ENCODE measurements at regions of chr1 and their contacts with region 1.

Region 1: DNA sequence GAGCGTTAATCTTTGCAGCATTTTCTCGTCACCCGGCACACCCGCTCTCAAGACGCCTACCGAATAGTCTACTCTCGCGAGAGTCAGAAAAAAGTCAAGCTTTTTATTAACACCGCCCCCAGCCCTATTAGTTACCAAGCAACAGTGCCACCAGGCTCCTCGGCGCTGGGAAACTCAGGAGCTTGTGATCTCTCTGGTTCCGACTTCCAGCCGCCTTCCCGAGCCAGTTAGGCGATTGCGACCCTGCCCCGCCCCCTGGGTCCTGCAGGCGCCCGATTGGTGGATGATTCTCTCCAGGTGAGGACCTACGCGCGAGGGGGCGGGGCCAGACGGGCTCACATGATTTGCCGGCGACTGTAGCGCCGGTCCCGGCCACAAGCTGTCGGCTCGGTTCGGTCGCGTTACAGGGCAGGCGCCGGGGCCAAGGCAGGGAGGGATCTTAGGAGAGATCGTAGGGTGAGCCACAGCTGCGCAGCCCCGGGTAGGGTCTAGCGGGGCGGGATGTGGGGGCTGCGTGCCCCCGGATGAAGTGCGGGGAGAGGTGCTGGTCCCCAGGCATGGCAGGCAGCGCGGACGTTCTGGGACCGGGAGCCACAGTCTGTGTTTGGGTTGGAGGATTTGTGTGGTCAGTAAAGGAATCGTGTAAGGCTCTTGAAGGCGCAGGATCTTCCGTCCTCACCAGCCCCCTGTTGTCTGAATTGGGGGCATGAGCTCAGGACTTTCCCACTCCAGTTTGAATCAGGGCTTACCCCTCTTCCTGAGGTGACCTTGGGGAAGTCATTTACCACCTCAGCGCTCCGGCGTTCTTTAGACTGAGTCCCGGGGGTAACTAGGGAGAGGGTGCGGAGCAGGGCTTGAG is at the start of gene PFKFB2:
- DNase-seq: peak; percentile 94
- ATAC-seq: peak; percentile 86
- H3K4me3 Mint-ChIP-seq: peak within 1 kb of the TSS; percentile 98
- H3K27ac Mint-ChIP-seq: peak within 1 kb of the TSS; percentile 98
- H3K4me1 Mint-ChIP-seq: peaks cover 56% of the 10 kb centered on the region
- H3K27me3 Mint-ChIP-seq: no peaks in the 10 kb centered on the region
- CTCF ChIP-seq: no peak
- total RNA-seq, gene PFKFB2: 7.6 and 10.1 TPM in 2 replicates

Region 2: DNA sequence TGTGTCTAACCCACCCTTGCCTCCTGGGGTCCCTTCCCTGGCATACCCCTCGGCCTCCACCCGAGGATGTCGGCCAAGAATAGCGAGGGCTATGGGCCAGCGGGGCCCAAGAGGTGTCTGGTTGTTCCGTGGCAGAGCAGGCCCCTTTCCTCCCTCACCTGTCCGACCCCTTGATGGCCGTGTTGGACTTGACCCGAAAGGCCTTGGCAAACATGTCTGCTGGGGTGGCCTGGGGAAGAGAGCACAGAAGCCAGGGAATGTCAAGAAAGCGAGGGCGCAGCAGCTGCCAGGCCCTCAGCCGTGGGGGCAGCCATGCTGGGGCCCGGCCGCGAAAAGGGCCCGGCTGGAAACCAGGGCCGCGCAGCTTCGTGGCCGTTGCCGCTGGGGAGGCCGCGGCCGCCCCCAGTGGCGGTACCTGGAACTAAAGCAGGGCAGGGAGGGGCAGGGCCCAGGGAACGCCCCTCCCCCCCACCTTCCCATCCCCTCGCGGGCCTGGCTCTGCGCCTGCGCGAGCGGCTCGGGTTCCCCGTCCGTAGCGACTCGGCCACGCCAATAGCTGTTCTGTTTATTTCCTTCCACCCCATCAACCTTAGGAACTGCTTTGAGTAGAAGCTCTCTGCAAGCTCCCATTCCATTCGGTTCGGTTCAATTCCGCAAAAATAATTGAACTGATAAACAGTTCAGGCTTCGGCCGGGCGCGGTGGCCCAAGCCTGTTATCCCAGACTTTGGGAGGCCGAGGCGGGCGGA is 440.8 kb before region 1 on chr1 and contains the start of gene EIF2D:
- CTCF ChIA-PET with region 1: no interaction called
- POLR2A ChIA-PET with region 1: interaction called, 4 read pairs
- intact Hi-C with region 1: loop called (anchors 5 kb)
- DNase-seq: peak; percentile 95
- ATAC-seq: peak; percentile 98
- H3K4me3 Mint-ChIP-seq: peak within 1 kb of the TSS; percentile 96
- H3K27ac Mint-ChIP-seq: peak within 1 kb of the TSS; percentile 97
- H3K4me1 Mint-ChIP-seq: peaks cover 30% of the 10 kb centered on the region
- H3K27me3 Mint-ChIP-seq: no peaks in the 10 kb centered on the region
- CTCF ChIP-seq: peak; percentile 72
- total RNA-seq, gene EIF2D: 61.2 and 65.4 TPM in 2 replicates

Region 3: DNA sequence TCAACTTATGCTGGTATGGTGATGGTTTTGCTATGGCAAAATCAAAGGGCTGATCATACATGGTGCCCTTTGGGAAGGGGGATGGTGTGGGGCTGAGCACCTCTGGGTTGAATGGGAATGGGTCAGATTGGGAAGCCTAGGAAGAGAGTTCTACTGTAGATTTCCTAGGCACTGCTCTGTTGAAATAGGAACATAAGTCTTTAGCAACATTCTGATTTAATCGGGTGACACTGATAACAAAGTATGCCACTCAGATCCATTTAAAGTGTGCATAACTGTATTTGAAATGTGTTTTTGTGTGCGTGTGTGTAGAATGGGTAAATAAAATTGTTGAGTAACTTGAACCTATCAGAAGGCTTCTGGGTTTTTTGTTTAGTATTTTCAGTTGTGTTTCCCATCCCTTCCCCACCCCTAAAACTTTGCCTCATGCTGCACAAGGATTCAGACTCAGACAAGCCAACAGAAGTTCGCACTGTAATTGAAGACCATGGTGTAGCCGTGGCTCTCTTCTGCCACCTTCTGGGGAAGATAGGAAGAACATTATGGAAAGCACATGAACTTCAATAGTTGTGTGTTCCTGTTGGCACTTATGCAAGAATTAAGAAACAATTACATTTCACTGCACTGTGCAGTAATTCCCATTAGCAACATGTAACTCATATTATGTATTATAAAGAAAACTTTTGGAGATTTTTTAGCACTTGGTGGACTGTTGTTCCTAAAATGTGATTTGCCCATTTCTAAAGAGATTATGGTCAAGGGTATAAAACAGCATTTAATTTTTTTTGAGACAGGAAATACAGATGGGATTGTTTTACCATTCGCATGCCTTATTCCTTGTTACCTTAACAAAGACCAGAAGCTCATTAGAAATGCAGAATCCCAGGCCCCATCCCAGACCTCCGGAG is 24.6 kb after region 1 on chr1:
- CTCF ChIA-PET with region 1: interaction called, 26 read pairs
- POLR2A ChIA-PET with region 1: interaction called, 4 read pairs
- intact Hi-C with region 1: loop called (anchors 1 kb)
- DNase-seq: no peak
- ATAC-seq: peak; percentile 95
- H3K4me3 Mint-ChIP-seq: no peak overlapping the region
- H3K27ac Mint-ChIP-seq: no peak overlapping the region
- H3K4me1 Mint-ChIP-seq: no peaks in the 10 kb centered on the region
- H3K27me3 Mint-ChIP-seq: no peaks in the 10 kb centered on the region
- CTCF ChIP-seq: no peak

Measured in activated B cell treated with CpG ODN at 0.5 μM for 24 hours (primary cell).